Aorta (tissue), 5 donors: ENCODE measurements at regions of chr12 and their contacts with region 1.

Region 1: DNA sequence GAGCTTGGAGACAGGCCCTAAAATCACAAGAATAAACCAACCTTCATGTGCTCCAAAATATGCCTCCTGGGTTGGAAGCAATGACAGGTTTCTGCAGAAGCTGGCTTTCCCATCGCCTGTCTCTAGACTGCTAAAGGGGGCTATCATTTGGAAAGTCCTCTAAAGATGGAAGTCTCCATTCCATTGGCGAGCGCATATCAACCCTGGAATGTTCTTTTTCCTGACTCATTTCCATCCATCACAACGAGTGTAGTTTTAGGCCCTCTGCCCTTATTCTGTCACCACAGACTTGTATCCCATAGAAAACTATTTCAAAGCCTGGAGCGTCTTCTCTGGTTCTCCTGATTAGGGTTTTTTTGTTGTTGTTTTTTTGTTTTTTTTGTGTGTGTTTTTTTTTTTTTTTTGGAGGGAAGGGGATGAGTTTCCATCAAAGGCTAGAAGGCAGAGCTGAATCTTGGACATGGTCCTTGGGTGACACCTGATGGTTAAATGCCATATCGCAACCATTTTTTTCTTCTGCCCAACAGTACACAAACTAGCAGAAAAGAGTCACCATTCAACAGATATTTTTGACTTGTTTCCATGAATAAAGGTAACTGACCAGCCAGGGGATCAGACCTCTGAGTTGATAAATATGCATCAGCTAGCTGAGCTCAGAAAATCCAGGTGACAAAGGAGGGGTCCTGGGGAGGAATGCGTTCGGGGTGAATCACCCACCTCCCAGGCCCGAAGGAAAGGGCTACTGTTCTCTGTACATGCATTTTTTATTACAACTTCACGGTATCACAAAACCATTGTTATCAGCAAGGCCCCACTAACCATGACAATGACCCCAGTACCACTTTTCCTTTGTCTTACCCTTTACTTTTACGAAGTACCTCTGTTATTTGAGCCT is 40.5 kb downstream of the KCNA5 start:
- DNase-seq: no peak
- ATAC-seq: peak; percentile 77
- H3K4me3 ChIP-seq: no peak overlapping the region
- H3K27ac ChIP-seq: peak overlapping the region; percentile 24 to 49
- H3K4me1 ChIP-seq: peaks cover 0 to 11% of the 10 kb centered on the region in 2 donors
- H3K27me3 ChIP-seq: no peaks in the 10 kb centered on the region

Region 2: DNA sequence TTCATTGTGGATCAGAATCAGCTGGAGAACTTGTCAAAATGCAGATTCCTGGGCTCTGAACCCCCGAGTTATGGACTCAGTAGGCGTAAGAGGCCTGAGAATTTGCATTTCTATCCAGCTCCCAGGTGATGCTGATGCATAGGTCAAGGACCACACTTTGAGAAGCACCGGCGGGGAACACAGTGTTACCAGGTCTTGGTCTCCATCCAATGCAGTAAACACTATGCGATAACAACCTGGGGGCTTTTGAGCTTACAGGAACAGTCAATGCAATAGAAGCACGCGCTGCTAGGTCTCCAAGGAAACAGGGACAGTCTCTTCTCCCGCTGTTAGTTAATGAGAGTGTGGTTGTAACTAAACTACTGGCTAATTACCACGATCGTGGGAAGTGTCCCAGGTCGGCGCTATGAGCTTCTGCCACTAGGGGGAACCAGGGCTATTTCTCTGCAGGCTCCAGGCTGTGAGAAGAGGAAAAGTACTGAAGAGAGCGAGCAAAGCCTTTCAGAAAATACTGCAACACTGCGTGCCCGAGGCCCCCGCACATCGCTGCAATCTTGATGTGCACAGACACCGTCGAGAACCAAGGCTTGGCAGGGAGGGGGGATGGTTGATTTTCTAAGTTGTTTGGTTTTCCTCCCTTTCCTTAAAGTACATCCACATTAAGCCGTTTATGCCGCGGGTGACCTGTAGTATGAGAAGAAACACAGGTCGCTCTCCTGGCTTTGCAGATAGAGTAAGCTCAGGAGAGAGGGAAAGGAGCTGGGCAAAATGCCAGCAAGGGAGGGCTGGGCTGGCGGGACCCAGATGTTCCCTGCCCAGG is 226.5 kb before region 1 on chr12:
- intact Hi-C with region 1: loop called in 1 of 2 experiments (anchors 5 kb)
- DNase-seq: peak; percentile 72 to 89
- ATAC-seq: peak; percentile 80
- H3K4me3 ChIP-seq: no peak overlapping the region
- H3K27ac ChIP-seq: no peak overlapping the region
- H3K4me1 ChIP-seq: no peaks in the 10 kb centered on the region
- H3K27me3 ChIP-seq: no peaks in the 10 kb centered on the region

Region 3: GRCh38 chr12:5022465-5023061 is 61.6 kb before region 1 on chr12:
- intact Hi-C with region 1: loop called (anchors 1 to 2 kb)
- DNase-seq: peak in 1 of 2 donors; percentile 81
- ATAC-seq: peak; percentile 63
- H3K4me3 ChIP-seq: no peak overlapping the region
- H3K27ac ChIP-seq: no peak overlapping the region
- H3K4me1 ChIP-seq: peaks cover 0 to 2% of the 10 kb centered on the region in 2 donors
- H3K27me3 ChIP-seq: no peaks in the 10 kb centered on the region

Region 4: DNA sequence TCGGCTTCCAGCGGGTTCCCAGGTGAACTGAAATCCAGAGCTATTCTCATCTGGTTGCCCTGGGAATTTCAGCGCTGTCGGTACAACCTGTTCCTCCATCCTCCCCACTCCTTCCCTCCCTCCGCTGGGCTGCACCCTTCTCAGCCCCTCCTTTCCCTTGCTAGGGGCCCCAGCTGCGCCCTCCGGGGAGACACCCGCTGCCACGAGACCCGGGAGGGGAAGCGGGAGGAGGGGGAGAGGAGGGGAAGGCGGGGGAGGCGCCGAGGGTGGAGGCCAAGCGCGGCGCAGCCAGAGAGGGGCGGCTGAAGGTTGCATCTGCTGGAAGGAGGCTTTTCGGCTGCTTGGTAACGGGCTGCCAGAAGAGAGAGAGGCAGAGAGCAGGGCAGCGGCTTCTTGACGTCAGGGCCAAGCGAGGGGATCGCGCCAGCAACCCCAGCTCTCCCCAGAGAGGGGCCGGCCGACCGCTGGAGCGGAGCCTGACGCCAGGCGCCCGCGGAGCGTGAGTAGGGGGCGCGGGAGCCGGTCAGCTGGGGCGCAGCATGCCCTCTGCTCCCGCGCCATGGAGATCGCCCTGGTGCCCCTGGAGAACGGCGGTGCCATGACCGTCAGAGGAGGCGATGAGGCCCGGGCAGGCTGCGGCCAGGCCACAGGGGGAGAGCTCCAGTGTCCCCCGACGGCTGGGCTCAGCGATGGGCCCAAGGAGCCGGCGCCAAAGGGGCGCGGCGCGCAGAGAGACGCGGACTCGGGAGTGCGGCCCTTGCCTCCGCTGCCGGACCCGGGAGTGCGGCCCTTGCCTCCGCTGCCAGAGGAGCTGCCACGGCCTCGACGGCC is 40.4 kb before region 1 on chr12 and contains the start of gene KCNA5:
- intact Hi-C with region 1: loop called (anchors 5 kb)
- DNase-seq: peak; percentile 80 to 88
- ATAC-seq: peak; percentile 76
- H3K4me3 ChIP-seq: peak within 1 kb of the TSS; percentile 39 to 87
- H3K27ac ChIP-seq: peak within 1 kb of the TSS; percentile 71 to 95
- H3K4me1 ChIP-seq: peaks cover 0 to 4% of the 10 kb centered on the region in 2 donors
- H3K27me3 ChIP-seq: no peaks in the 10 kb centered on the region
- total RNA-seq, gene KCNA5: 84.7 to 84.9 TPM

Region 5: DNA sequence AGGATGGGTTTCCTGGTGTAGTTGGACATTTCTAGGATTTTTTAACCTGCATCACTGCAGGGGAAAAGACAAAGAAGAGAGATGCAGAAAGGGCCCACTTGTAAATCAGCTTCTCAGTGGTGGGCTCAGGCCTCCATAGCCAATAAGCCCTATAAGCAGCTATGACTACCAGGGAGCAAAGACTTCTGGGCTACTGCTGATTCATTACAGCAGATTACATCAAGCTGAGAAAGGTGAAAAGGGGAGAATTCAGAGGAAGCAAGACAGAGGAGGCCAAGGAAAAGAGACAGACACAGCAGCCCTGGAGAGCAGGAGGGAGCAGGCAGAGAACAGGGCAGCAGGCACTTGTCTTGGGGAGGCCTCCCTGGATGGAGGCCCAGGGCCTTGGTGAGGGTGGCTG is 54.6 kb after region 1 on chr12:
- intact Hi-C with region 1: loop called in 1 of 2 experiments (anchors 10 kb)
- DNase-seq: no peak
- ATAC-seq: peak; percentile 7
- H3K4me3 ChIP-seq: no peak overlapping the region
- H3K27ac ChIP-seq: peak overlapping the region; percentile 78 to 96
- H3K4me1 ChIP-seq: peaks cover 0 to 2% of the 10 kb centered on the region in 2 donors
- H3K27me3 ChIP-seq: no peaks in the 10 kb centered on the region

Region 6: DNA sequence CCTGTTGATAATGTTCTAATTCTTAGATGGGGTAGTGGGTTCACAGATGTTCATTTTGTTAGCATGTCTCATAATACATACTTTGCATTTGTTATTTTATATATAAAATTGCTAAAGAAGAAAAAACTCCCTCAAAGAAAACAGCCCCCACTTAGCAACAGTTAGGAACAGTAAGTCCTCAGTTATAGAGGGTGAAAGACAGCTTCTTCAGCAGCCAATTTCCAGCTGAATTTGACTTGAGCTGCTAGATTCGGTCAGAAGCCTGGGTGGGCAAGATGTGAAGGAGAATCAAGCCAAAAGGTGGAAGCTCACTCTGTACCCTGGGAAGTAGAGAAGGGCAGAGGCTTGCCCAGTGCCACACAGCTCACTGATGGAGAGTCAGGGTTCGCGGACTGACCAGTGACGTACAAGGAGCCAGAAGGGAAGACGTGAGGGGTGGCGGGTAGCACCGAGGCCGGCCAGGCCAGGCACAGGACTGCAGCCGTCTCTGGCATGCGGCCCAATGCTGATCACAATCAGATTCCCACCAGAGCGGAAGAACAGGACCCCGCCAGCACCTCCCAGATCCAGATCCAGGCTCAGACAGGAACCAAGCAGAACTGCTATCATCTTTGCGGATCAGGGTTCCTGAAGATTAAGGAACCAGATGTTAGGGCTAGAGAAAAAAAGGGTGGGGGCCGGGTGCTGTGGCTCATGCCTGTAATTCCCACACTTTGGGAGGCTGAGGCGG is 1070.7 kb after region 1 on chr12:
- intact Hi-C with region 1: no loop called
- DNase-seq: peak in 1 of 2 donors; percentile 66
- ATAC-seq: peak; percentile 36
- H3K4me3 ChIP-seq: no peak overlapping the region
- H3K27ac ChIP-seq: no peak overlapping the region
- H3K4me1 ChIP-seq: no peaks in the 10 kb centered on the region
- H3K27me3 ChIP-seq: no peaks in the 10 kb centered on the region